ENCODE measurements at regions of chr5 and their contacts with region 1.

Region 1: GRCh38 chr5:140564196-140565023 is at the starts of genes APBB3 and SLC35A4:
- DNase-seq: peak; percentile 89 to 99 (median 98)
- ATAC-seq: peak; percentile 92
- H3K4me3 ChIP-seq: peak within 1 kb of the TSS; percentile 91
- H3K4me3 Mint-ChIP-seq: peak within 1 kb of the TSS; percentile 91 to 96 (median 94)
- H3K27ac ChIP-seq: peak within 1 kb of the TSS; percentile 94
- H3K27ac Mint-ChIP-seq: peak within 1 kb of the TSS; percentile 92 to 99 (median 96)
- H3K4me1 ChIP-seq: peaks cover 21 to 25% of the 10 kb centered on the region in 2 donors
- H3K4me1 Mint-ChIP-seq: peaks cover 27 to 75% (median 62%) of the 10 kb centered on the region in 7 donors
- H3K27me3 ChIP-seq: no peaks in the 10 kb centered on the region
- H3K27me3 Mint-ChIP-seq: no peaks in the 10 kb centered on the region
- total RNA-seq, gene APBB3: 37.9 to 77.8 (median 72.4) TPM
- total RNA-seq, gene SLC35A4: 40.4 to 90.1 (median 52.4) TPM

Region 2: GRCh38 chr5:140302786-140303639 is 261.4 kb before region 1 on chr5 and contains the start of gene PFDN1:
- CTCF ChIA-PET with region 1: no interaction called
- POLR2A ChIA-PET with region 1: no interaction called
- intact Hi-C with region 1: loop called (anchors 2 kb)
- DNase-seq: peak; percentile 79 to 94 (median 89)
- ATAC-seq: peak; percentile 99
- H3K4me3 ChIP-seq: peak within 1 kb of the TSS; percentile 90
- H3K4me3 Mint-ChIP-seq: peak within 1 kb of the TSS; percentile 92 to 100 (median 98)
- H3K27ac ChIP-seq: peak within 1 kb of the TSS; percentile 91
- H3K27ac Mint-ChIP-seq: peak within 1 kb of the TSS; percentile 95 to 100 (median 98)
- H3K4me1 ChIP-seq: peaks cover 10 to 11% of the 10 kb centered on the region in 2 donors
- H3K4me1 Mint-ChIP-seq: peaks cover 4 to 39% (median 33%) of the 10 kb centered on the region in 7 donors
- H3K27me3 ChIP-seq: no peaks in the 10 kb centered on the region
- H3K27me3 Mint-ChIP-seq: peaks cover 0 to 9% (median 5%) of the 10 kb centered on the region in 5 donors
- total RNA-seq, gene PFDN1: 24.8 to 52.7 (median 28.2) TPM

Region 3: DNA sequence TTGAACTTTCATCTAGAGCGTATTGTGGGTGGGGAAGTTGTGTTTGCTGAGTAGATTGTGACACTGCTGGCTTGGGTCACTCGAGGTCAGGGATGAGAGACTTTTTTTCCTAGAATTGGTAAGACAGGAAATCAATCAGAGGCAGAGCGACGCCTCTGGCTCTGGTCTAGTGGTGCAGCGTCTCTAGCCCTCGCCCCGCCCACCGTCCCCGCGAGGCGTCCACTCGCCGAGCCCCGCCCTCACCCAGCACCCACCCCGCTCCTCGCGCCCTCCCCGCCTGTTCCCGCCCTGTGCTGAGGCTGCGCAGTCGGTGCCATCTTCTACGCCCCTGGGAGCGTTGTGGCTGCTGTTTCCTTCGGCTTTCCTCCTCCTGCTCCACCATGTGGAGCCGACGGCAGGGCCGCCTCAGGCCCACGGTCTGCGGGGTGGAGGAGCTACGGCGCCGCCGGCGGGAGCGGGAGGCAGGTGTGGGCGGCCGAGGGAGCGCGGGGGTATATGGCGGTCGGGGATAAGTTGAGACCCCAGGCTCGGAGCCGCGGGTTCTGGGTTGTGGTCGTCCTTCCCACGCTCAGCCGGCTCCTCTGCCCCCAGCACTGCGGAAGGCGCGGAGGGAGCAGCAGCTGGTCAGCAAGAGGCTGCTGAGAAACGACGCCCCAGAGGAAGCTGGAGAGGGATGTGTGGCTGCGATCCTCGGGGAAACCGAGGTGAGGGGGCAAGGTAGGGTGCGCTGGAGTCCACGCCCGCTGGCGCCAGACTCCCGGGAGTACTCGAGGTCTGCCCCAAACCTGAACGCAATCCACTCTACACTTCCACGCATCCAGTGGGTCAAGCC is 75.0 kb after region 1 on chr5 and contains the start of gene TMCO6:
- CTCF ChIA-PET with region 1: interaction called, 3 read pairs
- POLR2A ChIA-PET with region 1: interaction called, 19 read pairs
- intact Hi-C with region 1: loop called (anchors 1 kb)
- DNase-seq: peak; percentile 89 to 96 (median 94)
- ATAC-seq: peak; percentile 99
- H3K4me3 ChIP-seq: peak within 1 kb of the TSS; percentile 66
- H3K4me3 Mint-ChIP-seq: peak within 1 kb of the TSS; percentile 86 to 97 (median 93)
- H3K27ac ChIP-seq: peak within 1 kb of the TSS; percentile 79
- H3K27ac Mint-ChIP-seq: peak within 1 kb of the TSS; percentile 87 to 100 (median 93)
- H3K4me1 ChIP-seq: peaks cover 6% of the 10 kb centered on the region in 2 donors
- H3K4me1 Mint-ChIP-seq: peaks cover 21 to 54% (median 40%) of the 10 kb centered on the region in 7 donors
- H3K27me3 ChIP-seq: no peaks in the 10 kb centered on the region
- H3K27me3 Mint-ChIP-seq: no peaks in the 10 kb centered on the region
- total RNA-seq, gene TMCO6: 24.5 to 55.3 (median 36.4) TPM

Region 4: GRCh38 chr5:140690941-140691924 is 126.8 kb after region 1 on chr5 and contains the starts of genes HARS1 and HARS2:
- CTCF ChIA-PET with region 1: no interaction called
- POLR2A ChIA-PET with region 1: interaction called, 7 read pairs
- intact Hi-C with region 1: loop called (anchors 1 kb)
- DNase-seq: peak; percentile 55 to 83 (median 71)
- ATAC-seq: peak; percentile 97
- H3K4me3 ChIP-seq: peak within 1 kb of the TSS; percentile 91
- H3K4me3 Mint-ChIP-seq: peak within 1 kb of the TSS; percentile 92 to 100 (median 99)
- H3K27ac ChIP-seq: peak within 1 kb of the TSS; percentile 89
- H3K27ac Mint-ChIP-seq: peak within 1 kb of the TSS; percentile 91 to 99 (median 98)
- H3K4me1 ChIP-seq: peaks cover 16 to 22% of the 10 kb centered on the region in 2 donors
- H3K4me1 Mint-ChIP-seq: peaks cover 29 to 60% (median 53%) of the 10 kb centered on the region in 7 donors
- H3K27me3 ChIP-seq: no peaks in the 10 kb centered on the region
- H3K27me3 Mint-ChIP-seq: no peaks in the 10 kb centered on the region
- total RNA-seq, gene HARS1: 48.7 to 85.7 (median 68.5) TPM
- total RNA-seq, gene HARS2: 25.4 to 59.6 (median 38.8) TPM

Region 5: DNA sequence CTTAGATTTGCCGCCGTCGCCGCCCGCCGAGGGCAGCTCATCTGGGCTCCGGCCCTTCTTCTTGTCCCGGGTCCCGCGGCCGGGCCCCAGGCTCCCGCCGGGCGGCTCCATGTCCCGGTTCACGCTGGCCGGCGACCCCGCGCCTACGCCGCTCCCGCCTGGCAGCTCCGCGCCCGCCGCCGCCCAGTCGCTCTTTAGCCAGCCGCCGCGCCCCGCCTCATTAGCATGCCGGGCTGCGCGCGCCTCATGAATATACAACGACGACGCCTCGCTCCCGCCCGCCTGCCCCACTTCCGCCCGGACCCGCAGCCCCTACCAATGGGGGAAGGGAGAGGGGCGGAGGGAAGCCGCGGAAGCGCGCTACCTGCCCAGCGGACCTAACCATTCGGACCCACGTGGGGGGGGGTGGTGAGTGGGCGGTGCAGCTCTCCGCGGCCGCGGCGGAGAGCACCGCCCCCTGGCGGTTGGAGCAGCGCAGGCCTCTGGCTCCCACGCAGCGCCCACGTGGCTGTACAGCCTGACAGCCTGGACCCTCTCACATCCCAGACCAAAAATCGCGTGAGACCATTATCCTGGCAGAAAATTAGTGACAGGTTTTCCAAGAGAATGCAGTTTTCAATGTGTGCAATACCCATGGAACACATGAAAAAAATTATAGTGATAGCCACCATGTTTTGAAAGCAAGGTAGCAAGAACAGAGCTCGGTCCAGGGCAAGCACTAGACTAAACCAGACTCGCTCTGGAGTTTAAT is 1054.6 kb after region 1 on chr5 and contains the start of gene DIAPH1:
- CTCF ChIA-PET with region 1: no interaction called
- POLR2A ChIA-PET with region 1: no interaction called
- intact Hi-C with region 1: loop called (anchors 10 kb)
- DNase-seq: peak; percentile 91 to 98 (median 96)
- ATAC-seq: peak; percentile 98
- H3K4me3 ChIP-seq: peak within 1 kb of the TSS; percentile 77
- H3K4me3 Mint-ChIP-seq: peak within 1 kb of the TSS; percentile 94 to 100 (median 100)
- H3K27ac ChIP-seq: peak within 1 kb of the TSS; percentile 97
- H3K27ac Mint-ChIP-seq: peak within 1 kb of the TSS; percentile 91 to 99 (median 95)
- H3K4me1 ChIP-seq: peaks cover 11 to 22% of the 10 kb centered on the region in 2 donors
- H3K4me1 Mint-ChIP-seq: peaks cover 44 to 61% (median 56%) of the 10 kb centered on the region in 7 donors
- H3K27me3 ChIP-seq: no peaks in the 10 kb centered on the region
- H3K27me3 Mint-ChIP-seq: no peaks in the 10 kb centered on the region
- total RNA-seq, gene DIAPH1: 163 to 278 (median 173) TPM

Measured in naive thymus-derived CD4-positive, alpha-beta T cell (primary cell).